ENCODE measurements at regions of chr1 and their contacts with region 1.

Region 1: GRCh38 chr1:26405281-26405915 is 5.2 kb upstream of the LIN28A start:
- DNase-seq: no peak
- H3K4me3 Mint-ChIP-seq: no peak overlapping the region
- H3K27ac Mint-ChIP-seq: no peak overlapping the region
- H3K4me1 Mint-ChIP-seq: peaks cover 15% of the 10 kb centered on the region
- H3K27me3 Mint-ChIP-seq: peaks cover 44% of the 10 kb centered on the region

Region 2: DNA sequence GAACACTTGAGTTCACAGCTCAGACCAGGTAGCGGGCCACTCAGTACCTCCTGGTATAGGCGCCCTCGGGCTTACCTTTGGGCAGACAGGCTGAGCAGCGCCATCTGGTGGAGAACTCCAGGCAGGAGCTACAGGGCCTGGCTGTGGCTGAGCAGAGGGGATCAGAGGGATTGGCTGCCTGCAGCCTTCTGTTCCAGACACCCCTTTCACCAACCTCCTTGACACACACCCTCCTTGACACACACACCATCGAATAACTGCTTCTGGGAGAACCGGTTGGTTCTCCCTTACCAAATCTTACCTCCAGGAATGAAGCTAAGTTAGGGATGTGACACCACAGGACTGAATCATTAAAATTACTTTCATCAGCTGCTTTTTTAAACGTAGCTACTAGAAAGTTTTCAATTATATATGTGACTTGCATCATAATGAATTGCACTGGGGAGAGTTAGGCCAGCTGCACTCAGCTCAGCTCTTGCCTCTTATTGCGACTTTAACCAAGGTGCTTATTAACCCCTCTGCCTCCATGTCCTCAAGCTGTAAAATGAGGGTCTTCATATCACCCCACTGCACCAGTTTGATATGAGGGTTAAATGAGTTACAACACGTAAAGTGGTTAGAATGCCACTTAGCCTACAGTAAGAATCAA is 11.8 kb after region 1 on chr1:
- CTCF ChIA-PET with region 1: interaction called, 18 read pairs
- POLR2A ChIA-PET with region 1: no interaction called
- DNase-seq: peak; percentile 92
- H3K4me3 Mint-ChIP-seq: no peak overlapping the region
- H3K27ac Mint-ChIP-seq: no peak overlapping the region
- H3K4me1 Mint-ChIP-seq: no peaks in the 10 kb centered on the region
- H3K27me3 Mint-ChIP-seq: peaks cover 53% of the 10 kb centered on the region